Calu3 (cell line): ENCODE measurements at regions of chr14 and their contacts with region 1.

Region 1: GRCh38 chr14:33839193-33840076 is 111.4 kb downstream of the EGLN3 start:
- DNase-seq: peak; percentile 46
- H3K4me3 Mint-ChIP-seq: no peak overlapping the region
- H3K27ac Mint-ChIP-seq: no peak overlapping the region
- H3K4me1 Mint-ChIP-seq: no peaks in the 10 kb centered on the region
- H3K27me3 Mint-ChIP-seq: no peaks in the 10 kb centered on the region
- CTCF ChIP-seq: peak; percentile 80

Region 2: DNA sequence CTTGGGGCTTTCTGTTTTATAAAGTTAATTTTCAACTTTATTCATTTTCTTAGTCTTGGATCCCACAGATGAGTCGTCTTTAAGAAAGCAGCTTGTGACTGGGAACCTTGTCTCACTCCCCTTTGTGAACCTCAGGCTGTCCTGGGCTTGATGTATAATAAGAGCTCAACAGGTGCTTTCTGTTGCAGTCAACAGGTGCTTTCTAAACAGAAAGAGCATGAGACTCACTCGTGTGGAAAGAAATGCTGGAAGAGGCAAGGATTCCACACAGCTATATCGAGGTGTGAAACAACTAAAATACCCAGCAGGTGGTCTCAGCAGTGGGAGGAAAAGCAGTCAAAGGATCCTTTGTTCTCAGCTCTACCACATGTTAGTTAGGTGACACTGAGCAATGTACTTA is 287.5 kb before region 1 on chr14:
- CTCF ChIA-PET with region 1: no interaction called
- intact Hi-C with region 1: no loop called
- DNase-seq: no peak
- H3K4me3 Mint-ChIP-seq: no peak overlapping the region
- H3K27ac Mint-ChIP-seq: no peak overlapping the region
- H3K4me1 Mint-ChIP-seq: no peaks in the 10 kb centered on the region
- H3K27me3 Mint-ChIP-seq: no peaks in the 10 kb centered on the region
- CTCF ChIP-seq: no peak

Region 3: DNA sequence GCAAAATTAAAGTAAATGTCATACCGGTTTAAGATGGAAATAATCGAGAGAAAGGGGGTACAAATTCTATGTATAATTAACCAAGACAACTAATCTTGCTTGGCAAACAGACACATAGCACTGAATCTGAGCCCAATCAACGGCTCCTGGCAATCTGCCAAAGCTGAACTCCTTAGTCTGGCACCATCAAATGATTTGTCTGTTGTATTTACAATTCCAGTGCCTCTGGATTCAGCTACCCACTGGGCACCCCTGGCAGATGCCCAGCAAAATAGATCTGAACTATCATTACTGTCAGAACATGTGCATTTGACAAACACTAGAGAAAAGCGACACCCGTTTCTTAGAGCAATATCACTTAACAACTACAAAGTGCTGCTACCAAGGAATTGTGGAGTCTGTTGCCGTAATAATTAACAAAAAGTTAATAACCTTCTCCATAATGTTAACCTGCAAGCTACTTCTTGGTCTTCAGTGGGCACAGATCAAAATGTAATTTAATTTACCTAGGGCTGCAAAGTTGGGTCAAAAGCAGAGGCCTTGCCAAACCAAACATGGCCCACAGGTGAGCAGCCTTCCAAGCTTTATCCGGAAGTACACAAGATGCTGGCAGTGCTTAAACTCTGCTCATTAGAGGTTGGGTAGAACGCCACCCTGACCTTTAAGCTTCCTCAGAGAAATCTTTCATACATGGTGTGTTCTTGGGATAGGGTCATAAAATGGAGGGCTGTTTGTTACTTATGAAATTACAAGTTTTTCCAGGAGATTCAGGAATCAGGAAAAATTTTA is 103.9 kb after region 1 on chr14:
- CTCF ChIA-PET with region 1: no interaction called
- intact Hi-C with region 1: loop called (anchors 10 kb)
- DNase-seq: peak; percentile 43
- H3K4me3 Mint-ChIP-seq: peak overlapping the region; percentile 14
- H3K27ac Mint-ChIP-seq: no peak overlapping the region
- H3K4me1 Mint-ChIP-seq: peaks cover 13% of the 10 kb centered on the region
- H3K27me3 Mint-ChIP-seq: peaks cover 4% of the 10 kb centered on the region
- CTCF ChIP-seq: no peak

Region 4: DNA sequence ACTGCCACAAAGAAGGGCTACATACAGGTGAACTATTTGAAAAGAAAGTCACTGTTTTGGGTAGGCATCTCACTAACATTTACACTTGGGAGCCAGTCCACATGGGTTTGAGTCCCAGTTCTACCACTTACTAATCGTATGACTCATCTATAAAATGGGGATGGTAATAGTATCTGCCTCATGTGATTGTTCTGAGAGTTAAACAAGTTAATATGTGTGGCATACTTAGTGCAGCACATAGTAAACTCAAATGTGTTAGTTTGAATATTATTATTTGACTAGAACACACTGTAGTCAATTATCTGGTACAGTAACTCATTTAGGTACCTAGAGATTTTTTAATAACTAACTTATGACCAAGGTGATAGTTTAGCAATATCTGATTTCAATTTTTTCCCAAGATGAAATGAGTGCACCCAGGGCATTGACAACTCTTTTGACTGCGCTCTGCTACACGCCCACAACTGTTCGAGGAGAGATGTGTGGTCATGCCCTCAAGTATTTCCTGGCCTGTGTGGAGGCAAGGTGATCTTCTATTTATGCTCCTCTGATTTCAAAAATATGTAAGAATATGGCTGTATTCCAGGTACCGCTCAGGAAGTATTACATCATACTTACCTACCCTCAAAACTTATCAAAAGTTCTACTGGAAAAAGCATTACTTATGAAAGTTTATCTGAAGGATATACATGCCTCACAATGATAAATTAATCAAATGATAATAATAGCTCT is 322.1 kb after region 1 on chr14:
- CTCF ChIA-PET with region 1: no interaction called
- intact Hi-C with region 1: no loop called
- DNase-seq: peak; percentile 37
- H3K4me3 Mint-ChIP-seq: no peak overlapping the region
- H3K27ac Mint-ChIP-seq: no peak overlapping the region
- H3K4me1 Mint-ChIP-seq: no peaks in the 10 kb centered on the region
- H3K27me3 Mint-ChIP-seq: no peaks in the 10 kb centered on the region
- CTCF ChIP-seq: no peak

Region 5: GRCh38 chr14:34227834-34228649 is 388.6 kb after region 1 on chr14:
- CTCF ChIA-PET with region 1: no interaction called
- intact Hi-C with region 1: loop called (anchors 2 kb)
- DNase-seq: peak; percentile 75
- H3K4me3 Mint-ChIP-seq: no peak overlapping the region
- H3K27ac Mint-ChIP-seq: no peak overlapping the region
- H3K4me1 Mint-ChIP-seq: peaks cover 43% of the 10 kb centered on the region
- H3K27me3 Mint-ChIP-seq: no peaks in the 10 kb centered on the region
- CTCF ChIP-seq: peak; percentile 63